GM10248 (cell line): ENCODE measurements at regions of chr2 and their contacts with region 1.

Region 1: DNA sequence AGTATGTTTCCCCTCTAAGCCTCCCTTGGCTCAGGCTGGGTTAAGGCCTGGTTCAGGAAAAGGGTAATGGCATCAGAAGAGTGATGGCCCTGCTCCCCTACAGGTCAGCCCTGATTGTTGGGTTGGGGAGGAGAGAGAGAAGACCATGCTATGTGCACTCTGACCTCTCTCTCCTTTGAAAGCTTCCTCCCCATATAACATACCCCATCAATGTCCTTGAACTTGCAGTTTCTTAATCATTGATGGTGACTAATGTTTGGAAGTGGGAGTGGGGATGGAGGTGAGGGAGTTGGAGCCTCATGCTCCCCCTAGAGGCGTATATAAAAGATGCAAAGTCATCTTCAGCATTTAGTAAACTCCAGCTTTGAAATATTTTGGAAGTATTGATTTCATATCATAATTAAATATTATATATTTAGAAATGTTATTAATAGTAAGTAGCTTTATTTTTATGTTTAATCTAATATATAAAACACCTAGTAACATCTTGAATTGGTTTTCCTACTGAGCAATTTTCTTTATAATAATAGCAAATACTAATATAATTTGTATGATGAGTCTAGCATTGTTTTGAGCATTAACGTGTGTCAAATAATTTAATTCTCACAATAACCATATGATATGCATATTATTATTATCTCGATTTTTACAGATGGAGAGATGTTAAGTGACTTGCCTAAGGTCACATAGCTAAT is 8.8 kb downstream of the PLCL1 start:
- DNase-seq: peak; percentile 14
- CTCF ChIP-seq: peak; percentile 48

Region 2: GRCh38 chr2:197838036-197838435 is 24.8 kb after region 1 on chr2:
- CTCF ChIA-PET with region 1: interaction called, 18 read pairs
- POLR2A ChIA-PET with region 1: no interaction called
- DNase-seq: peak; percentile 64
- CTCF ChIP-seq: no peak